Mammary epithelial cell (primary cell): ENCODE measurements at regions of chr7 and their contacts with region 1.

Region 1: GRCh38 chr7:135177021-135177696 is 6.7 kb upstream of the CYREN start:
- DNase-seq: peak; percentile 96
- H3K4me3 ChIP-seq: no peak overlapping the region
- H3K27ac ChIP-seq: peak overlapping the region; percentile 92
- H3K4me1 ChIP-seq: peaks cover 33% of the 10 kb centered on the region
- H3K27me3 ChIP-seq: no peaks in the 10 kb centered on the region
- CTCF ChIP-seq: no peak

Region 2: GRCh38 chr7:135193615-135194081 is 16.5 kb after region 1 on chr7:
- CTCF ChIA-PET with region 1: no interaction called
- dilution Hi-C with region 1: no loop called
- in situ Hi-C with region 1: no loop called
- intact Hi-C with region 1: loop called (anchors 1 kb)
- DNase-seq: peak; percentile 87
- H3K4me3 ChIP-seq: peak overlapping the region in 1 of 3 experiments; percentile 28
- H3K27ac ChIP-seq: peak overlapping the region; percentile 68
- H3K4me1 ChIP-seq: peaks cover 44% of the 10 kb centered on the region
- H3K27me3 ChIP-seq: no peaks in the 10 kb centered on the region
- CTCF ChIP-seq: no peak

Region 3: DNA sequence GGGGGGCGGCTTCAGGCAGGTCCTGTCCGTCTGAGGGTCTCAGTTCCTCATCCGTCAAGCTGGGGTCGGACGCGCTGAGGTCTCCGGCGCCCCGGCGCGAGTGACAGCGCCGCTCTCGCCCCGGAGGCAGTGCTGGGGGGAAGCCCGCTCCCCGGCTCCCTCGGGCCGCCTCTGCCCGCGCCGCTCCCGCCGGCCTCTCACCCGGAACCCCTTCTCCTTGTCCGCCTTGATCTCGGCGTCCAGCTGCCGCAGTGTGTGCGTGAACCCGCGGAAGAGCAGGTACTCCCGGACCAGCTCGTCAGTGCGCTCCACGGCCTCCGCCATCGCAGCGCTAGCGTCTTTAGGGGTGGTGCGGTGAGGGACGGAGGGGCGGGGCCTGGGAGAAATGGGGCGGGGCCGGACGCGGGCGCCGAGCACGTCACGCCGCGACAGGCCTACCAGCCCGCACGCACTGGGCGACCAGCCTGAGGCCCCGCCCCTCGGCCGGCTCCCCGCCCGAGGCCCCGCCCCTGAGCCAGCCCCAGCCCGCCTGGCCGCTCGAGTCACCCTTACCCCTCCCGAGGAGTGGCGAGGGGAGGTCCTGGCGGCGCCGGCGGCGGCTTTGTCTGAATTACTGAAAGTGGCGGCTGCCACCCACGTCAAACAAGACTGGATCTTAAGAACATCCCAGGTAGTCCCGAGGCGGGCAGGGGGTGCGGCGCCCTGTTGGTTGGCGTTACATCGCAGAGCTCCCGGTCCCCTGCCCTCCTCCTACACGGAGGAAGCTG is 34.2 kb after region 1 on chr7 and contains the start of gene WDR91:
- CTCF ChIA-PET with region 1: no interaction called
- dilution Hi-C with region 1: loop called (anchors 5 kb)
- in situ Hi-C with region 1: no loop called
- intact Hi-C with region 1: loop called (anchors 2 kb)
- DNase-seq: peak; percentile 93
- H3K4me3 ChIP-seq: peak within 1 kb of the TSS; percentile 80 to 87 (median 81)
- H3K27ac ChIP-seq: peak within 1 kb of the TSS; percentile 82
- H3K4me1 ChIP-seq: peaks cover 36% of the 10 kb centered on the region
- H3K27me3 ChIP-seq: no peaks in the 10 kb centered on the region
- CTCF ChIP-seq: peak in 1 of 2 donors; percentile 6
- total RNA-seq, gene WDR91: 31.5 to 33.8 TPM